ENCODE measurements at regions of chr1 and their contacts with region 1.

Region 1: DNA sequence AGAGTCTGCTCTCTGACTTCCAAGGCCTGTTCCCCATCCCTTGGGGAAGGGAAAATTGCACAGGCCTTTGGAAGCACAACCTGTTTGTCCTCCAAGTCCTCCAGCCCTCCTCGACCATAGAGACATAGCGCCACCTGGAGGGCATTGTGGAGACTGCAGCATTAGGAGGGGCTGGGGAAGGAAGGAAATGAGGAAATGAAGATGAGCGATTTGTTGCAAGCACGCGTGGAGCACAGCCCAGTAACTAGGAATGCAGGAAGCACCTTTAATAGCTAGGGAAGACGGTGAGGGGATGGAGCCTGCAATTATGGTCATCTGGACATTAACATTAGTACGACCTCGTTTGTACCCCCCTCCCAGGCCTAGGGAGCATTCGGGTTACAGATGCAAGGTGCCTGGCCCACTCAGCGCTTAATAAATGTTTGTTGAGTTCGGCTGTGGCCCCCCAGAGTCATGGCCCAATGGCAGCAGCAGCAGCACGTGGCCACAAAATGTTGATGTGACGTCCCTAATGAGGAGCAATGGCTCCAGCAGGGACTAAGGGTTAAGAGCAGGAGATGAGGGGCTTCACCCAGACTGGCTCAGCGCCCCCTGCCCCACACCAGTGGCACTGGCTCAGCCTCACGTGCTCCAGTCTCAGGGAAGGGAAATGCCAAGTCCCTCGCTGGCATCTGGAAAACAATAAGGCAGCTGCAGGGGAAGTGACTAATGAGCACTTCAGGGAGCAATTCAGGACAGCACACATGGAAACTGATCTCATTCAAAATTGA is 8.0 kb upstream of the CAMK2N1 start:
- DNase-seq: peak; percentile 64 to 88 (median 76)
- ATAC-seq: peak; percentile 94
- H3K4me3 ChIP-seq: peak overlapping the region; percentile 29
- H3K4me3 Mint-ChIP-seq: no peak overlapping the region
- H3K27ac ChIP-seq: no peak overlapping the region
- H3K27ac Mint-ChIP-seq: no peak overlapping the region
- H3K4me1 ChIP-seq: no peaks in the 10 kb centered on the region
- H3K4me1 Mint-ChIP-seq: peaks cover 0 to 10% (median 0%) of the 10 kb centered on the region in 7 donors
- H3K27me3 ChIP-seq: no peaks in the 10 kb centered on the region
- H3K27me3 Mint-ChIP-seq: peaks cover 0 to 26% (median 0%) of the 10 kb centered on the region in 5 donors

Region 2: GRCh38 chr1:19715334-19716203 is 778.5 kb before region 1 on chr1:
- CTCF ChIA-PET with region 1: no interaction called
- POLR2A ChIA-PET with region 1: no interaction called
- intact Hi-C with region 1: loop called in 1 of 2 experiments (anchors 5 kb)
- DNase-seq: peak; percentile 55 to 83 (median 69)
- ATAC-seq: peak; percentile 99
- H3K4me3 ChIP-seq: no peak overlapping the region
- H3K4me3 Mint-ChIP-seq: no peak overlapping the region
- H3K27ac ChIP-seq: no peak overlapping the region
- H3K27ac Mint-ChIP-seq: no peak overlapping the region
- H3K4me1 ChIP-seq: peaks cover 0 to 9% of the 10 kb centered on the region in 2 donors
- H3K4me1 Mint-ChIP-seq: peaks cover 7 to 24% (median 13%) of the 10 kb centered on the region in 7 donors
- H3K27me3 ChIP-seq: no peaks in the 10 kb centered on the region
- H3K27me3 Mint-ChIP-seq: no peaks in the 10 kb centered on the region

Region 3: GRCh38 chr1:20151906-20152598 is 342.0 kb before region 1 on chr1:
- CTCF ChIA-PET with region 1: no interaction called
- POLR2A ChIA-PET with region 1: no interaction called
- intact Hi-C with region 1: loop called in 1 of 2 experiments (anchors 1 kb)
- DNase-seq: peak; percentile 47 to 79 (median 71)
- ATAC-seq: peak; percentile 93
- H3K4me3 ChIP-seq: peak overlapping the region; percentile 71
- H3K4me3 Mint-ChIP-seq: peak overlapping the region; percentile 74 to 90 (median 82)
- H3K27ac ChIP-seq: no peak overlapping the region
- H3K27ac Mint-ChIP-seq: peak overlapping the region in 3 of 9 donors; percentile 25 to 61 (median 60)
- H3K4me1 ChIP-seq: peaks cover 5 to 11% of the 10 kb centered on the region in 2 donors
- H3K4me1 Mint-ChIP-seq: peaks cover 6 to 20% (median 12%) of the 10 kb centered on the region in 7 donors
- H3K27me3 ChIP-seq: no peaks in the 10 kb centered on the region
- H3K27me3 Mint-ChIP-seq: no peaks in the 10 kb centered on the region

Region 4: DNA sequence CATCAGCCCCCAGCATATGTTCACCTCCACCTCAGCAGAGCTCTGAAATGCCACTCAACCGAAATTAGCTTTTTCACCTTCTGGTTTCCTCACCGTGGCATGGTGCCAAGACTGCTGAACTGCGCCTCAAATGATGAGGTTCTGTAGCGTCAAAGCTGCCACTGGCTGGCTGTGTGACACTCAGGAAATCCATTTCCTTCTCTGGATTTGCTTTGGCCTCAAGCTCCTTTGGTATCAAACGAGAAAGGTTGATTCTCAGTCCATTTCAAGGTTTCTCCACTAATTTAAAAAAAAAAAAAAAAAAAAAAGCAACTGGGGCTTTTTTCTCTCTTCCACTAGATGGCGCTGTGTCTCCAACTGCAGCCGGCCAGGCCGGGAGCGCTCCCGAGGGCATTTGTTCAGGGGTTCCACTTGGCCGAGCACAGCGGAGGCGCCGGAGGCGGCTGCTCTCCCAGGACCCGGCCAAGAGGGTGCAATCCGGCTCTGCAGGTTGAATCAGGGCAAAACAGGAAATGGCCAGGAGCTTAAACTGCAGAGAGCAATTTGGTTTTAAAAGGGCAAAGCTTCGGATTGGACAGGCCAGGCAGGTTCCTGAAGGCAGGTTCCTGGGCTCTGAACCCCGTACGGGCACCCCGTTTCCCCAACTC is 281.2 kb before region 1 on chr1:
- CTCF ChIA-PET with region 1: interaction called, 15 read pairs
- POLR2A ChIA-PET with region 1: no interaction called
- intact Hi-C with region 1: loop called (anchors 1 kb)
- DNase-seq: peak; percentile 20 to 63 (median 47)
- ATAC-seq: peak; percentile 74
- H3K4me3 ChIP-seq: no peak overlapping the region
- H3K4me3 Mint-ChIP-seq: peak overlapping the region in 8 of 10 donors; percentile 32 to 61 (median 54)
- H3K27ac ChIP-seq: no peak overlapping the region
- H3K27ac Mint-ChIP-seq: no peak overlapping the region
- H3K4me1 ChIP-seq: peaks cover 4% of the 10 kb centered on the region in 2 donors
- H3K4me1 Mint-ChIP-seq: peaks cover 0 to 9% (median 2%) of the 10 kb centered on the region in 7 donors
- H3K27me3 ChIP-seq: no peaks in the 10 kb centered on the region
- H3K27me3 Mint-ChIP-seq: peaks cover 20 to 42% (median 35%) of the 10 kb centered on the region in 5 donors

Region 5: DNA sequence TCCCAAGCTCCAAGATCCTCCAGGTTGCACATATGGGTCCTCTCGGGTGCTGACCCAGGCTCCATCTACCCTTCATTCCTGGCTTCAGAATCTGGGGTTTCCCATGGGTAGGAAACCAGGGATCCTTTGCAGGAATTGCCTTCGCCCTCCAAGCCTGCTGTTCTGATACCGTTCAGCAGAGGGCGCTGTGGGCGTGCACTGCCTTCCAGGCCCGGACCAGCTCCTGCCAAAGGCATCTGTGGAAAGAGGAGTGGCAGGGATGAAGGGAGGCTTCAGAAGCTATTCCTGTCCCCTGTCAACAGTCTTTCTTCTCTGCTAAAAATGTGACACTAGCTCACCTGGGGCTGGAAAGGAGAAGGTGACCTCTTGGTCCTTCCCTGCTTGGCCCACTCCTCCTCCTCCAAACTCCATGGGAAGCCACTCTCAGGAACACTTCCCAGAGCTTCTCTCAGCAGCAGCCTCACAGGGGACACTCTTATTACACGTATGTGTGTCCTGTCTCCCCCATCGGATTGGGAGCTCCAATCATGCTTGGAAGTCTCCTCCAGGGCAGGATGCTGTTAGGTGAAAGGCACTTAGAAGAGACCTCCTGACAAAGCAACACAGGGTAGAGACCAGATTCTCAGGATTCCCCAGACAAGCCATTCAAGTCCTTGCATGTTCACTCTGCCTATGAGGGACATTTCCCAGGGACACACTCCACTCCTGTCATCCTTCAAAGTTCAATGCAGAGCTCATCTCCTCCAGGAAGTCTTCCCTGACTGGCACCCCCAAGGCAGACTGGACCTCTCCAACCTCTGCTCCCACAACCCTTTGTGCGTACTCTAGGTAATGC is 132.0 kb before region 1 on chr1:
- CTCF ChIA-PET with region 1: interaction called, 5 read pairs
- POLR2A ChIA-PET with region 1: no interaction called
- intact Hi-C with region 1: loop called in 1 of 2 experiments (anchors 1 kb)
- DNase-seq: peak in 2 of 9 donors; percentile 8 to 38
- ATAC-seq: no peak
- H3K4me3 ChIP-seq: no peak overlapping the region
- H3K4me3 Mint-ChIP-seq: no peak overlapping the region
- H3K27ac ChIP-seq: no peak overlapping the region
- H3K27ac Mint-ChIP-seq: no peak overlapping the region
- H3K4me1 ChIP-seq: no peaks in the 10 kb centered on the region
- H3K4me1 Mint-ChIP-seq: peaks cover 5 to 12% (median 9%) of the 10 kb centered on the region in 7 donors
- H3K27me3 ChIP-seq: peaks cover 3 to 8% of the 10 kb centered on the region in 2 donors
- H3K27me3 Mint-ChIP-seq: peaks cover 40 to 71% (median 50%) of the 10 kb centered on the region in 5 donors

Region 6: DNA sequence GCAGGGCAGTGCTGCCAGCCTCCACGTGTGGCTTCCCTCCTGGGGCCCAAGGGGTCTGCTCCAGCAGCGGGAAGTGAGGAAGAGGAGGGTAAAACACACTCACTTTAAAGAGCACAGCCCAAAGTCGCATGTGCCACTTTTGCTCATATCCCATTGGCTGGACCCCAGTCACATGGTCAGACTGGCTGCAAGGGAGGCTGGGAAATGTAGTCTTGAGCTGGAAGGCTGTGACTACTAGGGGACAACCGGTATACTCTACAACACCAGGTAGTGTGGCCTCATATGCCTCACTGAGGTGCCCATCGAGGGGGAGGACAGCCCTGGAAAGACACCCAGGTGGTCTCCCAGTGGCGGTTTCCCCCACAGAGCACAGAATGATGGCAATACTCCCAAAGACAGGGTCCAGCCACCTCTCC is 53.2 kb before region 1 on chr1:
- CTCF ChIA-PET with region 1: no interaction called
- POLR2A ChIA-PET with region 1: no interaction called
- intact Hi-C with region 1: no loop called
- DNase-seq: peak in 7 of 9 donors; percentile 2 to 39 (median 29)
- ATAC-seq: peak; percentile 74
- H3K4me3 ChIP-seq: no peak overlapping the region
- H3K4me3 Mint-ChIP-seq: no peak overlapping the region
- H3K27ac ChIP-seq: no peak overlapping the region
- H3K27ac Mint-ChIP-seq: no peak overlapping the region
- H3K4me1 ChIP-seq: no peaks in the 10 kb centered on the region
- H3K4me1 Mint-ChIP-seq: peaks cover 0 to 2% (median 0%) of the 10 kb centered on the region in 7 donors
- H3K27me3 ChIP-seq: no peaks in the 10 kb centered on the region
- H3K27me3 Mint-ChIP-seq: peaks cover 5 to 12% (median 5%) of the 10 kb centered on the region in 5 donors

Region 7: DNA sequence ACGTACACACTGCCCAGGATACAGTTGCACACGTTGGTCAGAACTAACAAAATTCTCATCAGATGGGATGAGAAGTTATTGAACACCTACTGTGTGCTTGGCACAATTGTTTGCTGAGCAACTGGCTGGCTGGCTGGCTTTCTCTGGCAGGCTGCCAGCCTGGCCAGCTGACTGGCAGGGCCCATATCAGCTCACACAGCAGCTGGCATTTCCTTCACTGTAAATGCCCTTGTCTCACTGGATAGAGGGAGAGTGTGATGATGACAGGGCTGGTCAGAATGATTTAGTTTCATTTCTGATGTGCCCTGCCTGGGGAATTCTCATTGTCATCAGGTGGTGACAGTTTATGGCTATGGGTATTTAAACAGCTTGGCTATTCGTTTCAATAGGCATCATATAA is 23.8 kb before region 1 on chr1:
- CTCF ChIA-PET with region 1: no interaction called
- POLR2A ChIA-PET with region 1: no interaction called
- intact Hi-C with region 1: loop called in 1 of 2 experiments (anchors 1 kb)
- DNase-seq: no peak
- ATAC-seq: no peak
- H3K4me3 ChIP-seq: no peak overlapping the region
- H3K4me3 Mint-ChIP-seq: no peak overlapping the region
- H3K27ac ChIP-seq: no peak overlapping the region
- H3K27ac Mint-ChIP-seq: no peak overlapping the region
- H3K4me1 ChIP-seq: no peaks in the 10 kb centered on the region
- H3K4me1 Mint-ChIP-seq: peaks cover 0 to 4% (median 0%) of the 10 kb centered on the region in 7 donors
- H3K27me3 ChIP-seq: no peaks in the 10 kb centered on the region
- H3K27me3 Mint-ChIP-seq: peaks cover 37 to 66% (median 50%) of the 10 kb centered on the region in 5 donors